CD8-positive, alpha-beta memory T cell (primary cell): ENCODE measurements at regions of chr1 and their contacts with region 1.

Region 1: GRCh38 chr1:23422241-23423030 is 2.1 kb downstream of the TCEA3 start:
- DNase-seq: peak in 4 of 5 donors; percentile 14 to 62 (median 48)
- H3K4me3 ChIP-seq: peak overlapping the region; percentile 20
- H3K4me3 Mint-ChIP-seq: peak overlapping the region; percentile 31 to 87 (median 67)
- H3K27ac ChIP-seq: peak overlapping the region; percentile 2
- H3K27ac Mint-ChIP-seq: peak overlapping the region in 7 of 8 donors; percentile 35 to 94 (median 45)
- H3K4me1 ChIP-seq: peaks cover 22% of the 10 kb centered on the region
- H3K4me1 Mint-ChIP-seq: peaks cover 23 to 26% (median 23%) of the 10 kb centered on the region in 3 donors
- H3K27me3 ChIP-seq: no peaks in the 10 kb centered on the region
- H3K27me3 Mint-ChIP-seq: peaks cover 15 to 20% of the 10 kb centered on the region in 2 donors

Region 2: DNA sequence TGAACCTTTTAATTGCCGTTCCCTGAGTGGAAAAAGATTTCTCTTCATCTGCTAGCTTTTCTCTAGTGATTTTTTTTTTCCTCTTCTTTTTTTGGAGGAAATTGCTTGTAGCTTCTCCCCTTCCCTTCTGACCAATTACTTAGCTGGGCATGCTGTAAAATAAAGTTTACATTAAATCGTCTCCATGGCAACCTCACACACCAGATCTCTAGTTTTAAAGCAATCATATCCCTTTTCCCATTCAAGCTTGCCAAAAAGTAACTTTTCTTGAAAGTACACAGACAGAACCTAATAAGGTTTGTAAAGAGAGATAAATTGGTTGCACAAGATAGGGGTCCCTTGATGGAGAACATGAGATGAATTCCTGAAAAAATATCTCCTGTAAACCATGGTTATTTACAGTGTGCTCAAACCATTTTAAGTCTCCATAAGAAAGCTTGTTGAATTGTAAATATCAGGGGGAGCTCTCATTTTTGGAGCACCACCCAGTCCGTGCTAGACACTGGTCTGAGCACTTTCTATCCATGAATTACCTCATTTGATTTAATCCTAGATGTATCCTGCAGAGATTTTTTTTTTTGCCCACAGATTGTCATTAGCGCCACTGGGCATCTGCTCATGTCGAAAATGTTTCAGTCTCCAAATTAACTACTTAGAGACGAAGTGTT is 172.5 kb before region 1 on chr1:
- CTCF ChIA-PET with region 1: no interaction called
- POLR2A ChIA-PET with region 1: no interaction called
- DNase-seq: no peak
- H3K4me3 ChIP-seq: no peak overlapping the region
- H3K4me3 Mint-ChIP-seq: no peak overlapping the region
- H3K27ac ChIP-seq: no peak overlapping the region
- H3K27ac Mint-ChIP-seq: no peak overlapping the region
- H3K4me1 ChIP-seq: no peaks in the 10 kb centered on the region
- H3K4me1 Mint-ChIP-seq: no peaks in the 10 kb centered on the region
- H3K27me3 ChIP-seq: no peaks in the 10 kb centered on the region
- H3K27me3 Mint-ChIP-seq: peaks cover 6 to 11% of the 10 kb centered on the region in 2 donors

Region 3: GRCh38 chr1:23273450-23274133 is 148.8 kb before region 1 on chr1:
- CTCF ChIA-PET with region 1: no interaction called
- POLR2A ChIA-PET with region 1: no interaction called
- DNase-seq: no peak
- H3K4me3 ChIP-seq: no peak overlapping the region
- H3K4me3 Mint-ChIP-seq: no peak overlapping the region
- H3K27ac ChIP-seq: no peak overlapping the region
- H3K27ac Mint-ChIP-seq: no peak overlapping the region
- H3K4me1 ChIP-seq: no peaks in the 10 kb centered on the region
- H3K4me1 Mint-ChIP-seq: no peaks in the 10 kb centered on the region
- H3K27me3 ChIP-seq: no peaks in the 10 kb centered on the region
- H3K27me3 Mint-ChIP-seq: peaks cover 22 to 47% of the 10 kb centered on the region in 2 donors

Region 4: GRCh38 chr1:23403735-23404486 is 18.5 kb before region 1 on chr1:
- CTCF ChIA-PET with region 1: interaction called, 11 read pairs
- POLR2A ChIA-PET with region 1: no interaction called
- DNase-seq: peak; percentile 56 to 85 (median 69)
- H3K4me3 ChIP-seq: no peak overlapping the region
- H3K4me3 Mint-ChIP-seq: no peak overlapping the region
- H3K27ac ChIP-seq: no peak overlapping the region
- H3K27ac Mint-ChIP-seq: no peak overlapping the region
- H3K4me1 ChIP-seq: peaks cover 5% of the 10 kb centered on the region
- H3K4me1 Mint-ChIP-seq: peaks cover 7 to 12% (median 12%) of the 10 kb centered on the region in 3 donors
- H3K27me3 ChIP-seq: no peaks in the 10 kb centered on the region
- H3K27me3 Mint-ChIP-seq: no peaks in the 10 kb centered on the region